CD14-positive monocyte (primary cell): ENCODE measurements at regions of chr2 and their contacts with region 1.

Region 1: DNA sequence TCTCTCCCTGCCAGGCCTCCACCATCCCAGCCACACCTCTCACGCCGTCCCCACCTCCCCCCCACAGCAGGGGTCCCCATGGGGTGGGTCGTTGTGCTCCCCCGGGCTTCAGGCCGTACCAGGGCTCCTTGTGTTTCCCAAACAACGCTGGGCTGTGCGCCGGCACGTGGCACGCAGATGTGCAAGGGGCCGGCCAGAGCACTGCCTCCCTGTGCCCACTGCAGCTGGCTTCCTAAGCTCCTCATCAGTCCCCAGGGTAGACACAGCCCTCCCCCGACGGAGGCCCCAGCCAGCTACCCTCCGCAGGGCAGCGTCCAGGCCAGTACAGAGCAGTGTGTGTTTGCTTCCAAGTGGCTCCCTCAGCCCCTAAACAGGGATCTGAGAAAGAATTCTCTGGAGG is 34.0 kb downstream of the BIN1 start:
- DNase-seq: no peak
- H3K4me3 ChIP-seq: no peak overlapping the region
- H3K4me3 Mint-ChIP-seq: no peak overlapping the region
- H3K27ac ChIP-seq: no peak overlapping the region
- H3K27ac Mint-ChIP-seq: no peak overlapping the region
- H3K4me1 ChIP-seq: peaks cover under 1 to 3% of the 10 kb centered on the region in 2 donors
- H3K4me1 Mint-ChIP-seq: peaks cover 12% of the 10 kb centered on the region
- H3K27me3 ChIP-seq: no peaks in the 10 kb centered on the region
- H3K27me3 Mint-ChIP-seq: peaks cover 3 to 8% (median 5%) of the 10 kb centered on the region in 3 donors
- CTCF ChIP-seq: no peak

Region 2: GRCh38 chr2:127106951-127107621 is 34.1 kb after region 1 on chr2 and contains the start of gene BIN1:
- intact Hi-C with region 1: loop called in 1 of 2 experiments (anchors 5 kb)
- DNase-seq: peak; percentile 65 to 76 (median 71)
- H3K4me3 ChIP-seq: peak within 1 kb of the TSS; percentile 52 to 81 (median 54)
- H3K4me3 Mint-ChIP-seq: peak within 1 kb of the TSS; percentile 83 to 90
- H3K27ac ChIP-seq: no peak within 1 kb of the TSS
- H3K27ac Mint-ChIP-seq: peak within 1 kb of the TSS in 4 of 7 donors; percentile 35 to 80 (median 58)
- H3K4me1 ChIP-seq: peaks cover 20 to 23% of the 10 kb centered on the region in 2 donors
- H3K4me1 Mint-ChIP-seq: peaks cover 10% of the 10 kb centered on the region
- H3K27me3 ChIP-seq: peaks cover 4 to 30% of the 10 kb centered on the region in 2 donors
- H3K27me3 Mint-ChIP-seq: peaks cover 18 to 45% (median 28%) of the 10 kb centered on the region in 3 donors
- CTCF ChIP-seq: no peak
- polyA plus RNA-seq, gene BIN1: 3.4 to 7.5 (median 4.1) TPM

Region 3: DNA sequence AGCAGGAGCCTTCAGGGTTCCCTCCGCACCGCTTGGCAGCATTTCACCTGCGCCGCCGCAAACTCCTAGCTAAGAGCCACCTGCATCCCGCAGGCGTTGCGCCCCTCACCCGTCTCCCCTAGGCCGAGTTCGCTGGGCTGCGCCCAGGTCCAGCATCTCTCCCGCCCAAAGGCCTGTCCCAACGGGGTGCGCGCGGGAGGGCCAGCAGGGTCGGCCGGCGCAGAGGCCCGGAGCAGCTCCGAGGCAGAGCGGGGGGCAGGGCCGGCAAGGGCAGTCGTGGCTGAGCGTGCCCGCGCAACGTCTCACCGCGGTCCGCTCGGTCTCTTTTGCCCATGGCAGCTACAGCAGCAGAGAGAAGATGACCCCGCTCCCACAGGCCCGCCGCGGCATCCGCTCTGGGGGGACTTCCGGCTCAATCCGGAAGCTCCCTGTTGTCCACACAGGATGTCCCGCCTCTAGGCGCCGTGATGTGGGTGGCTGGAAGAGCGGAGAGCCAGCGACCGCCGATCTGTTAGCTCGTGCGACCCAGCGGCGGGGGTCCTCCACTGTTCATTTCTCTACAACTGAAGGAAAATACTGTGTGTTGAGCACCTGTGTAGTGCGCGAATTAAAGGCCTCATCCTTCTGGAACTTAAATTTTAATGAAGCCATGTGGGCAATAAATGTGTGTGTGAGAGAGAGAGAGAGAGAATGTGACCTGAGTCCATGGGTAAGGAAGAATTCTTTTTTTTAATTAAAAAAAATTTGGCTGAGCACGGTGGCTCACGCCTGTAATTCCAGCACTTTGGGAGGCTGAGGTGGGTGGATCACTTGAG is 221.0 kb after region 1 on chr2 and contains the start of gene ERCC3:
- intact Hi-C with region 1: loop called in 1 of 2 experiments (anchors 10 kb)
- DNase-seq: peak; percentile 56 to 66 (median 61)
- H3K4me3 ChIP-seq: peak within 1 kb of the TSS; percentile 75 to 92 (median 81)
- H3K4me3 Mint-ChIP-seq: peak within 1 kb of the TSS; percentile 91 to 98
- H3K27ac ChIP-seq: peak within 1 kb of the TSS; percentile 39 to 83
- H3K27ac Mint-ChIP-seq: peak within 1 kb of the TSS; percentile 77 to 95 (median 92)
- H3K4me1 ChIP-seq: peaks cover 20 to 30% of the 10 kb centered on the region in 2 donors
- H3K4me1 Mint-ChIP-seq: peaks cover 24% of the 10 kb centered on the region
- H3K27me3 ChIP-seq: no peaks in the 10 kb centered on the region
- H3K27me3 Mint-ChIP-seq: peaks cover 0 to 2% (median 0%) of the 10 kb centered on the region in 3 donors
- CTCF ChIP-seq: no peak
- polyA plus RNA-seq, gene ERCC3: 13.2 to 49.7 (median 16.9) TPM

Region 4: DNA sequence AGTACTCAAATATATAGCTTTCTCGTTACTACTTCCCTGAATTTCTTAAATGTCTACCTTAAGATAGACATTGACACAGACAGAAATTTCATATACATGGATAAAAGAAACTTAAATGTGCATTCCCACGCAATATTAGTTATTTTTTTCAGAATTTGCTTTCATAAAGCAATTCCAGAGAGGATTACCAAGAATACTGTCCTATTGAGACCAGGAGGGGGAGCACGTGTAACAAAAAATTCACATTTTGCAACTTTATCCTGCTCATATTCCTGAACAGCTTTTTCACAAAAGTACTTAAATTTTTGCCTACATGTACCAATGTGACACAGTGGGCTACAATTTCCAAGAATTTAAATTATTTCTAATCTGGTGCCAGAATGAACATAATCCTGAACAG is 251.7 kb after region 1 on chr2:
- intact Hi-C with region 1: no loop called
- DNase-seq: no peak
- H3K4me3 ChIP-seq: no peak overlapping the region
- H3K4me3 Mint-ChIP-seq: no peak overlapping the region
- H3K27ac ChIP-seq: no peak overlapping the region
- H3K27ac Mint-ChIP-seq: no peak overlapping the region
- H3K4me1 ChIP-seq: no peaks in the 10 kb centered on the region
- H3K4me1 Mint-ChIP-seq: no peaks in the 10 kb centered on the region
- H3K27me3 ChIP-seq: no peaks in the 10 kb centered on the region
- H3K27me3 Mint-ChIP-seq: no peaks in the 10 kb centered on the region
- CTCF ChIP-seq: peak; percentile 59